ENCODE measurements at regions of chr12 and their contacts with region 1.

Region 1: DNA sequence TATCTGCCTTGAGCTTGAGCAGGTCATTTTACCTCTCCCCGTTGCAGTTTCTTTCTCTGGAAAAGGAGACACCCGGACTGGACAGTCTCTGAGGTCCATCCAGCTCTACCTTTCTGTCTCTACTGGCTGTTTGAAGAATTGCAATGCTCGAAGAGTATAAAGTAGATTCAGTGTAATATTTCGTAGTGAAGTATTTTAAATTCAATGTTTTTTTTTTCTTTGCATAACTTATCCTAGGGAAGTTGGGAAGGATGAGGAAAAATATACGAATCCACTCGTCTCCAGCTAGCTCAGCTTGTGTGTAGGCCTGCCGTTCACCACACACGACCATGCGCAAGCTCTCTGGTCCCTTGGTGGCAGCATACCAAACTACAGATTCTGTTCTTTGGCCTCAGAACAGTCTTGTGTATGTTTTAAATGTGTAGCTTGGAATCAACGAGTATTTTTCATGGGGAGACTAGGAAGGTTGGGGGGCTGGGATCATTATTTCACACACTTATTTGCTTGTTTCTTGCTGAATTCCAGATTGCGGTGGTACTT is 307.9 kb downstream of the CACNA1C start:
- DNase-seq: no peak
- H3K4me3 ChIP-seq: no peak overlapping the region
- H3K27ac ChIP-seq: no peak overlapping the region
- H3K4me1 ChIP-seq: no peaks in the 10 kb centered on the region
- H3K27me3 ChIP-seq: no peaks in the 10 kb centered on the region
- CTCF ChIP-seq: peak in 2 of 3 experiments; percentile 10 to 22; a peak in 3 of 4 replicates
- EP300 ChIP-seq: no peak
- POLR2A ChIP-seq: no peak
- RAD21 ChIP-seq: no peak

Region 2: DNA sequence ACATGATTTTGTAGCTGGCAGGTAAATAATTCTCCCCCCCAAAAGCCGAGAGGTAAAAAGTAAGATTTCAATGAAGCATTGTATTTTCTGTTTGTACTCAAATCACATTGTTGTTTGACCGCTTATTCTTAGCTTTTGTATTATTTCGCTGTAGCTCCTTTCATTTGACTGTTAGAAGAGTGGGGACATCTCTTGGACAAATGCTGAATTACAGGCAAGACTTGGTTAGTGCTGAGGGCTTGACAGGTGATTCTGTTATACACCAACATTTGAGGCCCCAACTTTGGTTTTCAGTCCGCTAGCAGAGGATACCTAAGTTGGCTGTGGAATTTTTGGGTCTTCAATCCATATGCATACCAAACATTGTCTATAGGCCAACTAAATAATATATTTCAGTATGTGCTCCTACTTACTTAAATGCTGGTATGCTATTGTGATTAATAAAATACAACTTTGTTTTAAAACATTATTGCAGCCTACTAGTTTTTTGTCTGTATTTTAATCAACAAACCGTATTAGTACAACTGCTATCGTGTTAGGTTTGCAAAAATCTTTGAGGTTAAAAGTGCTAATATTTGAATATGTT is 1267.4 kb before region 1 on chr12:
- CTCF ChIA-PET with region 1: no interaction called
- POLR2A ChIA-PET with region 1: no interaction called
- DNase-seq: no peak
- H3K4me3 ChIP-seq: no peak overlapping the region
- H3K27ac ChIP-seq: no peak overlapping the region
- H3K4me1 ChIP-seq: no peaks in the 10 kb centered on the region
- H3K27me3 ChIP-seq: no peaks in the 10 kb centered on the region
- CTCF ChIP-seq: peak in 2 of 3 experiments; percentile 56 to 75; a peak in 3 of 4 replicates
- EP300 ChIP-seq: no peak
- POLR2A ChIP-seq: no peak
- RAD21 ChIP-seq: peak; percentile 83 to 85

Region 3: GRCh38 chr12:2326470-2326869 is 34.2 kb before region 1 on chr12:
- CTCF ChIA-PET with region 1: interaction called, 15 read pairs
- POLR2A ChIA-PET with region 1: interaction called, 3 read pairs
- DNase-seq: no peak
- H3K4me3 ChIP-seq: no peak overlapping the region
- H3K27ac ChIP-seq: no peak overlapping the region
- H3K4me1 ChIP-seq: 0 out of 7 replicates have a peak, but pooled peaks cover 0 to 2% (median 0%) of the 10 kb centered on the region in 4 experiments
- H3K27me3 ChIP-seq: no peaks in the 10 kb centered on the region
- CTCF ChIP-seq: no peak
- EP300 ChIP-seq: no peak
- POLR2A ChIP-seq: no peak
- RAD21 ChIP-seq: no peak

Region 4: GRCh38 chr12:2344885-2345284 is 15.8 kb before region 1 on chr12:
- CTCF ChIA-PET with region 1: interaction called, 30 read pairs
- POLR2A ChIA-PET with region 1: interaction called, 4 read pairs
- DNase-seq: no peak
- H3K4me3 ChIP-seq: no peak overlapping the region
- H3K27ac ChIP-seq: no peak overlapping the region
- H3K4me1 ChIP-seq: peaks cover 3 to 12% (median 9%) of the 10 kb centered on the region in 4 experiments
- H3K27me3 ChIP-seq: no peaks in the 10 kb centered on the region
- CTCF ChIP-seq: no peak
- EP300 ChIP-seq: no peak
- POLR2A ChIP-seq: no peak
- RAD21 ChIP-seq: no peak

Region 5: DNA sequence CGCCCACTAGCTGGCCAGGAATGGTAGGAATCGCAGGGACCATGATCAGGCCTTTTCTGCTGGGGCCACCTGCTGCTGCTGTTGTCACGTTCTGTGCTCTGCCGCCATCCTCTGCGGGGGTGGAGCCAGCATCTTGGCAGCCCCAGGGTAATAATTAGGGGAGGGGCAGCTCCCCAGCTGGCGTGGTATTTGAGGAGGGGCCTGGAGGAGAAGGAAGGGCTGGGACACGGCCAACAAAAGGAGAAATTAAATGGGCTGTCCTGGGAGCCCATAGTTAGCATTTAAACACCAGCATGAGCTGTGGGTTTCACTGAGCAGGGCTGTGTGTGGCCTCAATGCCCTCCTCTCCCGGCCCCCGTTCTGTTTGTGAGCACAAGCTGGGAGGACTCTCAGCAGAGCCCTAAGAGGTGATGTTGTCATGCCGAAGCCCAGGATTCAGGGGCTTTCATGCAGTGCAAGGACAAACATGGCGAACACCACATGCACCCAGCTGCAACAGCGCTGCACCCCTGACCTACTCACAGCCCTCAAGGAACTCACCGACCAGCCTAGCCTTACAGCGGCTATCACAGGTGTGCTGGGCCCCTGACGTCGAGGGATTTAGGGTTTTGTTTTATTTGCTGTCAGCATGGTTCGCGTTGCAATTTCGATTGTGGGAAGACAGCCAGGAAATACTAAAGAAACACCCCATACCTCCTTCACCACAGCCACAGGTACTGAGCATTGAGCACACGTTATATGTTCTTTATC is 16.4 kb after region 1 on chr12:
- CTCF ChIA-PET with region 1: interaction called, 18 read pairs
- POLR2A ChIA-PET with region 1: interaction called, 4 read pairs
- DNase-seq: peak; percentile 29 to 64
- H3K4me3 ChIP-seq: no peak overlapping the region
- H3K27ac ChIP-seq: no peak overlapping the region; the same call in 1 of the 2 replicates
- H3K4me1 ChIP-seq: peaks cover 4 to 10% (median 6%) of the 10 kb centered on the region in 4 experiments; a peak in 6 of 7 replicates
- H3K27me3 ChIP-seq: no peaks in the 10 kb centered on the region
- CTCF ChIP-seq: peak in 2 of 3 experiments; percentile 18 to 28; a peak in 2 of 4 replicates
- EP300 ChIP-seq: no peak
- POLR2A ChIP-seq: no peak
- RAD21 ChIP-seq: peak; percentile 7 to 37; a peak in 3 of 4 replicates